AG04450 (cell line): ENCODE measurements at regions of chr17 and their contacts with region 1.

Region 1: GRCh38 chr17:77374170-77374936 is 233.6 kb downstream of the SEC14L1 start:
- DNase-seq: peak; percentile 74
- H3K4me3 ChIP-seq: peak overlapping the region; percentile 91
- H3K27ac ChIP-seq: peak overlapping the region; percentile 91
- H3K27me3 ChIP-seq: no peaks in the 10 kb centered on the region
- CTCF ChIP-seq: peak; percentile 56

Region 2: GRCh38 chr17:77354420-77355241 is 19.7 kb before region 1 on chr17:
- CTCF ChIA-PET with region 1: interaction called, 3 read pairs
- POLR2A ChIA-PET with region 1: interaction called, 10 read pairs
- DNase-seq: peak; percentile 90
- H3K4me3 ChIP-seq: no peak overlapping the region
- H3K27ac ChIP-seq: peak overlapping the region; percentile 98
- H3K27me3 ChIP-seq: no peaks in the 10 kb centered on the region
- CTCF ChIP-seq: no peak

Region 3: GRCh38 chr17:77391668-77392375 is 17.5 kb after region 1 on chr17:
- CTCF ChIA-PET with region 1: interaction called, 3 read pairs
- POLR2A ChIA-PET with region 1: interaction called, 10 read pairs
- DNase-seq: peak; percentile 96
- H3K4me3 ChIP-seq: peak overlapping the region; percentile 21
- H3K27ac ChIP-seq: peak overlapping the region; percentile 94
- H3K27me3 ChIP-seq: no peaks in the 10 kb centered on the region
- CTCF ChIP-seq: no peak

Region 4: GRCh38 chr17:77420804-77421629 is 46.7 kb after region 1 on chr17:
- CTCF ChIA-PET with region 1: interaction called, 7 read pairs
- POLR2A ChIA-PET with region 1: interaction called, 15 read pairs
- DNase-seq: peak; percentile 74
- H3K4me3 ChIP-seq: peak overlapping the region; percentile 14; the same call in 1 of the 2 replicates
- H3K27ac ChIP-seq: peak overlapping the region; percentile 69
- H3K27me3 ChIP-seq: no peaks in the 10 kb centered on the region
- CTCF ChIP-seq: no peak